CD8-positive, alpha-beta T cell (primary cell): ENCODE measurements at regions of chr4 and their contacts with region 1.

Region 1: GRCh38 chr4:146522098-146522868 is 543 bp upstream of the SLC10A7 start:
- DNase-seq: peak; percentile 60 to 90 (median 87)
- ATAC-seq: peak; percentile 82
- H3K4me3 ChIP-seq: peak overlapping the region; percentile 76 to 84
- H3K4me3 Mint-ChIP-seq: no peak overlapping the region
- H3K27ac ChIP-seq: peak overlapping the region; percentile 68 to 71
- H3K27ac Mint-ChIP-seq: no peak overlapping the region
- H3K4me1 ChIP-seq: peaks cover 16% of the 10 kb centered on the region
- H3K4me1 Mint-ChIP-seq: peaks cover 31% of the 10 kb centered on the region
- H3K27me3 ChIP-seq: no peaks in the 10 kb centered on the region
- H3K27me3 Mint-ChIP-seq: no peaks in the 10 kb centered on the region
- CTCF ChIP-seq: no peak

Region 2: GRCh38 chr4:145097821-145098674 is 1424.2 kb before region 1 on chr4 and contains the starts of genes ABCE1 and ANAPC10:
- CTCF ChIA-PET with region 1: no interaction called
- POLR2A ChIA-PET with region 1: no interaction called
- intact Hi-C with region 1: loop called (anchors 10 kb)
- DNase-seq: peak; percentile 84 to 99 (median 97)
- ATAC-seq: peak; percentile 89
- H3K4me3 ChIP-seq: peak within 1 kb of the TSS; percentile 70 to 81
- H3K4me3 Mint-ChIP-seq: peak within 1 kb of the TSS; percentile 95
- H3K27ac ChIP-seq: peak within 1 kb of the TSS; percentile 88 to 91
- H3K27ac Mint-ChIP-seq: peak within 1 kb of the TSS; percentile 98
- H3K4me1 ChIP-seq: peaks cover 41% of the 10 kb centered on the region
- H3K4me1 Mint-ChIP-seq: peaks cover 46% of the 10 kb centered on the region
- H3K27me3 ChIP-seq: no peaks in the 10 kb centered on the region
- H3K27me3 Mint-ChIP-seq: no peaks in the 10 kb centered on the region
- CTCF ChIP-seq: no peak
- total RNA-seq, gene ABCE1: 68.8 to 70.9 TPM
- total RNA-seq, gene ANAPC10: 24.5 to 26.7 TPM

Region 3: GRCh38 chr4:145732895-145733880 is 789.1 kb before region 1 on chr4:
- CTCF ChIA-PET with region 1: no interaction called
- POLR2A ChIA-PET with region 1: no interaction called
- intact Hi-C with region 1: loop called (anchors 5 to 10 kb)
- DNase-seq: peak; percentile 58 to 92 (median 83)
- ATAC-seq: peak; percentile 98
- H3K4me3 ChIP-seq: peak overlapping the region; percentile 71 to 73
- H3K4me3 Mint-ChIP-seq: peak overlapping the region; percentile 80
- H3K27ac ChIP-seq: peak overlapping the region in 1 of 2 experiments; percentile 45
- H3K27ac Mint-ChIP-seq: peak overlapping the region; percentile 29
- H3K4me1 ChIP-seq: peaks cover 3% of the 10 kb centered on the region
- H3K4me1 Mint-ChIP-seq: peaks cover 9% of the 10 kb centered on the region
- H3K27me3 ChIP-seq: no peaks in the 10 kb centered on the region
- H3K27me3 Mint-ChIP-seq: peaks cover 4% of the 10 kb centered on the region
- CTCF ChIP-seq: no peak

Region 4: DNA sequence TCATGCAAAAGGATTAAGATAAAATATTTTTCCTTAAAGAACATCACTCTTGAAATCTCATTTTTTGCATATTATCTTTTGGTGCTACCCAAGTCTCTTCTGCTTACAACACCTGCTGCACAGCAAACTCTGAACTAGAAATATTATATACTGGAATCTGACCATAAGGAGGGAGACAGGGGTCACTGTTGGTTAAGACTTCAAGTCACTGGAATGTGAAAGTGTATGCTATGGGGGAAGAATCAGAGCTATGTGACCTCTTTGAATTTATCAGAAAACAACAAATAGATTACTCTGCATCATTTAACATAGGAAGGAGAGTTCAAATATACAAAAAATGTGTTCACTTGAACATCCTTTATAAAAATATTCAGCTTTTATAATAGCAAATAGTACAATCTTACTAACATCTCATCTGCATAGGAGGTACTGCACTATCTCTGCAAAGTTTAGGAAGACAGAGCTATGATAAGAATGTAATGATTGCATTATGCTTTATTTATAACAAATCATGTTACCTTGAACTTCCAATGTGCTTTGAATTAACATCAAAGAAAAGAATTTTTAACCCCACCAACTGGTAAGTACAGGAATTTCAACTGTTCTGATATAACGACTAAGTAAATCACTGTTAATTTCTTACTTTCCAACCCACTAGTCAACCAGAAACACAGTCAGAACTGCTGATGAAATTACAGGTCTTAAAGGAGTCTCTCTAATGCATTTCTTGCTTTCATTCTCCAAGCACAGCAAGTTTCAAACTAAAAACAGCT is 653.5 kb before region 1 on chr4:
- CTCF ChIA-PET with region 1: no interaction called
- POLR2A ChIA-PET with region 1: no interaction called
- intact Hi-C with region 1: no loop called
- DNase-seq: peak in 1 of 9 experiments; percentile 9
- ATAC-seq: no peak
- H3K4me3 ChIP-seq: no peak overlapping the region
- H3K4me3 Mint-ChIP-seq: no peak overlapping the region
- H3K27ac ChIP-seq: no peak overlapping the region
- H3K27ac Mint-ChIP-seq: no peak overlapping the region
- H3K4me1 ChIP-seq: no peaks in the 10 kb centered on the region
- H3K4me1 Mint-ChIP-seq: peaks cover 35% of the 10 kb centered on the region
- H3K27me3 ChIP-seq: no peaks in the 10 kb centered on the region
- H3K27me3 Mint-ChIP-seq: no peaks in the 10 kb centered on the region
- CTCF ChIP-seq: no peak

Region 5: GRCh38 chr4:146458594-146458993 is 63.7 kb before region 1 on chr4:
- CTCF ChIA-PET with region 1: no interaction called
- POLR2A ChIA-PET with region 1: no interaction called
- intact Hi-C with region 1: loop called in 1 of 2 experiments (anchors 5 kb)
- DNase-seq: peak in 2 of 9 experiments; percentile 42 to 67
- ATAC-seq: peak; percentile 97
- H3K4me3 ChIP-seq: no peak overlapping the region
- H3K4me3 Mint-ChIP-seq: peak overlapping the region; percentile 52
- H3K27ac ChIP-seq: peak overlapping the region in 1 of 2 experiments; percentile 63
- H3K27ac Mint-ChIP-seq: peak overlapping the region; percentile 83
- H3K4me1 ChIP-seq: peaks cover 11% of the 10 kb centered on the region
- H3K4me1 Mint-ChIP-seq: peaks cover 23% of the 10 kb centered on the region
- H3K27me3 ChIP-seq: no peaks in the 10 kb centered on the region
- H3K27me3 Mint-ChIP-seq: no peaks in the 10 kb centered on the region
- CTCF ChIP-seq: no peak

Region 6: DNA sequence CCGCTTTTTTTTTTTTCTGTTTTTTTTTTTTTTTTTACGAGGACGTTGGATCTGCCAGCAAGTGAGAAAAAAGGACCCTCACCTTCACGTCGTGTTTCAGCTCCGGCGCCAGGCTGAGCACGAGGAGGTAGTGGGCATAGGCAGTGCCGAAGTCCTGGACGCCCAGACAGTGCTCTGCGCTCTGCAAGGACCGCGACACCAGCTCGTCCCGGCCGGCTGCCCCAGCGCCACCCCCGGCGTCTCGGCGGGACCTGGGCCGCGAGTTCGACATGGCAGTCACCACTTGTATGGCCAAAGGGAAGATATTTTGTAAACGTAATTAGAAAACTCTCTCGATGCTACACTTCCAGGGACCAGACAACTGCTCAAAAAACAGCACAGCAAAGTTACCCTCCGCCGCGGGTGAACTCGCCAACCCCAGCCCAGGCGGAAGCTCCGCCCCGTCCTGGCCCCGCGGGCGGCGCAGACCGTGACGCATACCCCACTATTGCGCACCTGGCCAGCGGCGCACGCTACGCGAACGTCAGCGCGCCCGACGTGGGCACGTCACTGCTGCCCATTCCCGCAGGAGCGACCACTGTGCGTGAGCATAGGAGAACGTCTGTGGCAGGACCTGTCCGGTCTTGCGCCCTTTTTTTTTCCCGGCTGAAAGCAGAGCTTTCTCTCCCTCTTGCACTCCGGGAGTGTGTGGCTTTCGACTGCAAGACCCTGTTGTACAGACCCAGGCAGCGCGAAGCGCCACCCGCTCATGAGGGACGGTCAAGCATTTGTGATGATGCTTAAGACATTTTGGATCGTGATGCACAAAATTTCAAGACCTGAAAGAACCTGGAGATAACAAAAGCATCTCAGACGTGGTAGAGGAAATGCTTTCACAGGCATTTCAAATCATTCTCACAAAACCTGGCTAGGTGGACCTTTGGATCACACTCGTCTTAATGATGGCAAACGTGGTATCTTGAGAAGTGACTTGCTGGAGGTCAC is 1161.7 kb after region 1 on chr4 and contains the start of gene PRMT9:
- CTCF ChIA-PET with region 1: no interaction called
- POLR2A ChIA-PET with region 1: no interaction called
- intact Hi-C with region 1: loop called in 1 of 2 experiments (anchors 5 kb)
- DNase-seq: peak; percentile 74 to 94 (median 88)
- ATAC-seq: peak; percentile 97
- H3K4me3 ChIP-seq: peak within 1 kb of the TSS; percentile 68 to 98
- H3K4me3 Mint-ChIP-seq: peak within 1 kb of the TSS; percentile 98
- H3K27ac ChIP-seq: peak within 1 kb of the TSS; percentile 92 to 98
- H3K27ac Mint-ChIP-seq: peak within 1 kb of the TSS; percentile 99
- H3K4me1 ChIP-seq: peaks cover 11% of the 10 kb centered on the region
- H3K4me1 Mint-ChIP-seq: peaks cover 40% of the 10 kb centered on the region
- H3K27me3 ChIP-seq: no peaks in the 10 kb centered on the region
- H3K27me3 Mint-ChIP-seq: peaks cover 8% of the 10 kb centered on the region
- CTCF ChIP-seq: no peak
- total RNA-seq, gene PRMT9: 36.4 to 40.3 TPM

Region 7: DNA sequence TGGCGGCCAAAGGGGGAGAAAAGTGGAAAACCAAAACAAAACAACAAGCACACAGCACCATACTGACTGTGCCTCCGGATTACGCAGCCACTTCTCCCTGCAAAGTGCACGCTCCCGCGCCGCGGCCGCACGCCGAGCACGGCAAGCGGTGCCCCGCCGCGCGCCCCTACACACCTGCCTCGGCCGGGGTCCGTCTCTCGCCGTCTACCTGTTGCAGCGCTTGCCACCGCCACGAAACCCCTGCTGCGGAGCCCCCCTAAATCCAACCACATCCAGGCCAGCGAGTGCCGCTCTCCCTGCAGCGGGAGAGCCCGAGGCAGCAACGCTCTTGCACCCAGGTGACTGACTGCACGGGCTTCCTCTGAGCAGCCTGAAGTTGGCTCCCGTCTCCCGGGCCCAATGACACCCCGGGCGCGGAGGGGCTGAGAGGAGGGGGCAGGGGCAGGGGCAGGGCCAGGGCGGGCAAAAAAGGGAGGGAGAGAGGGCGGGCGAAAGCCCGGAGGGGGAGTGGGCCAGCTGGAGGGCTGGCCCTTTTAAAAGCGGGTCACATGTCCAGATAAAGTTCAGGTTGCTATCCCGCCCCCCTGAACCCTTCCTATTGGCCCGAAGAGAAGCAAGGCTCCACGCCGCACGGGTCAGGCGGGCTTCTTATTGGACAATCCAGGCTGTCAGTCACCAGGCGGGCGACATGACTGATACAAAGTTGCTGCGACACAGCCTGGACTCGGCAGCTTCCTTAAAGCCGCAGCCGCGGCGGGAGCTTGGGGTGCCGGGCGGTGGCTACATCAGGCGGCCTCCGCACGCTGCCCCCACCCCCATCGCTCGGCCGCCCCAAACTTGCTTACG is 1919.9 kb after region 1 on chr4 and contains the start of gene NR3C2:
- CTCF ChIA-PET with region 1: no interaction called
- POLR2A ChIA-PET with region 1: no interaction called
- intact Hi-C with region 1: loop called in 1 of 2 experiments (anchors 10 kb)
- DNase-seq: peak; percentile 95 to 99 (median 97)
- ATAC-seq: peak; percentile 74
- H3K4me3 ChIP-seq: peak within 1 kb of the TSS; percentile 95
- H3K4me3 Mint-ChIP-seq: peak within 1 kb of the TSS; percentile 98
- H3K27ac ChIP-seq: peak within 1 kb of the TSS; percentile 93 to 99
- H3K27ac Mint-ChIP-seq: peak within 1 kb of the TSS; percentile 99
- H3K4me1 ChIP-seq: peaks cover 48% of the 10 kb centered on the region
- H3K4me1 Mint-ChIP-seq: peaks cover 53% of the 10 kb centered on the region
- H3K27me3 ChIP-seq: no peaks in the 10 kb centered on the region
- H3K27me3 Mint-ChIP-seq: no peaks in the 10 kb centered on the region
- CTCF ChIP-seq: no peak
- total RNA-seq, gene NR3C2: 29.6 to 32.4 TPM